ENCODE measurements at regions of chr19 and their contacts with region 1.

Region 1: GRCh38 chr19:33063356-33063752 is 1.3 kb downstream of the RHPN2 start:
- DNase-seq: peak; percentile 78
- H3K4me3 ChIP-seq: peak overlapping the region in 3 of 4 donors; percentile 87 to 94 (median 88)
- H3K27ac ChIP-seq: peak overlapping the region; percentile 82 to 95 (median 94)
- H3K4me1 ChIP-seq: peaks cover 0 to 23% (median 19%) of the 10 kb centered on the region in 4 donors
- H3K27me3 ChIP-seq: peaks cover 27% of the 10 kb centered on the region
- CTCF ChIP-seq: no peak
- EP300 ChIP-seq: no peak
- POLR2A ChIP-seq: no peak

Region 2: DNA sequence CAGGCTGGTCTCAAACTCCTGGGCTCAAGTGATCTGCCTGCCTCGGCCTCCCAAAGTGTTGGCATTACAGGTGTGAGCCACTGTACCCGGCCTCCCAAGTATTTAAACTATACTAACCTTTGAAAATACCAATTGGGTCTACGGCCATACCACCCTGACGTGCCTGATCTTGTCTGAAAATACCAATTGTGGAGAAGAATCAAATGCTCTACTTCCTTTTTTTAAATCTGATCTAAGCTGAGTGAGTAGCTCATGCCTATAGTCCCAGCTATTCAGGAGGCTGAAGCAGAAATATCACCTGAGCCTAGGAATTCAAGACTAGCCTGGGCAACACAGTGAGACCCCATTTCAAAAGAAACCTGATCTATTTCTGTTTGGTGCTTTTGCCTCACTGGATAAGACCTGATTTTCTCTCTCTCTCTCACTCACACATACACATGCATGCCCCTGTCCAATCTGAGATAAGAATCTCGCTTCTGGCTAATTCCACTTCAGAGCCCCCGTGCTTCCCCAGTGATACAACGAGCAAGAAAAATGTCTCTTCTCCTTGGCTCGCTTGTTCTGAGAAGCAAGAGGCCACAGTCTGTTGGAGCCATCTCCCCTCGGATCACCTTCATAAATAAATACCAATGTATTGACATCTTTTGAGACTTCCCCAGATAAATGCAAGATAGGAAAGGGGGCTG is 52.3 kb before region 1 on chr19:
- in situ Hi-C with region 1: no loop called
- intact Hi-C with region 1: loop called (anchors 1 kb)
- DNase-seq: no peak
- H3K4me3 ChIP-seq: no peak overlapping the region
- H3K27ac ChIP-seq: no peak overlapping the region
- H3K4me1 ChIP-seq: no peaks in the 10 kb centered on the region
- H3K27me3 ChIP-seq: no peaks in the 10 kb centered on the region
- CTCF ChIP-seq: no peak
- EP300 ChIP-seq: no peak
- POLR2A ChIP-seq: no peak

Measured in transverse colon (tissue), 4 donors.